ENCODE measurements at regions of chr4 and their contacts with region 1.

Region 1: DNA sequence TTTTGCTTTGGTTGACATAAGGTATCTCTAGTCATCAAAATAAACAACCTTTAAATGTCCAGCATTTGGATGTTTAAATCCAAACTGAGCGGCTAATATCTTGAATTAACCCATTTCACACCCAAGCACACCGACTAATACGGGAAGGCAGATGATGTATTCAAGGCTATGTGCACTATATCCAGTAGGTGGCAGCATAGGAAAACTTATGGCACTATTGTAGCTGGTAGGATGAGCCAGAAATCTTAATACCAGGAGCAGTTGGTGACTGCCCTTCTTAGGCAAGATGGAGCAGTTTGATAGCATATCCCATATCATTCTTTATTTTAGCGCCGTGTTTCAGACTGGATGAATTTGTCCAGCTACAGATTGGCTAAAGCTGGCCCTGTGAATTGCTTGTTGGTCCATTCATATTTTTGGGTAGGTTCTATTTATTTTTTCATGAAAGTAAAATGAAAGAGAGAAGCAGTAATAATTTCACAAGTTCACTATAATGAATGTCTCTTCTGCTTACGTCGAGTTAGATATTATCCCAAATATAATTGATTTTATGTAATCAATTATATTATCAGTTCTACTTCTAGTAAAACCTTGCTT is 24.4 kb downstream of the UCHL1 start:
- DNase-seq: peak; percentile 88
- H3K4me3 ChIP-seq: no peak overlapping the region
- H3K27ac ChIP-seq: no peak overlapping the region
- H3K4me1 ChIP-seq: no peaks in the 10 kb centered on the region
- H3K27me3 ChIP-seq: no peaks in the 10 kb centered on the region
- CTCF ChIP-seq: peak; percentile 87

Region 2: DNA sequence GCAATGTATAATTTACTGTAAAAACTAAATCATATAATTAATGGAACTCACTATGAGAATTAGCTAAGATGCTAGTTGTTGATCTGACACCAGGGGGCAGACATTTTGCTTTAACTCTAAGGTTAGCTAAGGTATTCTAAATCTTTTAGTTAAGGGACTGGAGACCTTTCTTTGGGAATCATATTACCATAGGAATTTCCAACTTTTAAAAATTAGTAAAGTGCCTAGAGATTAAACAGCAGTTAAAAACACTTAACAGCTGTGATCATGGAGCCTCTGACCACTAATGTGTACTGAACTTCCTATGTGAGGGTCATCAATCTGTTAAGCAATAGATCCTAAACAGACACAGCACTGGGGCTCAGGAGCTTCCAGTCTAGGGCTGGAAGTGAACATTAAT is 304.8 kb before region 1 on chr4:
- CTCF ChIA-PET with region 1: no interaction called
- POLR2A ChIA-PET with region 1: no interaction called
- intact Hi-C with region 1: no loop called
- DNase-seq: peak; percentile 62
- H3K4me3 ChIP-seq: no peak overlapping the region
- H3K27ac ChIP-seq: no peak overlapping the region
- H3K4me1 ChIP-seq: no peaks in the 10 kb centered on the region
- H3K27me3 ChIP-seq: no peaks in the 10 kb centered on the region
- CTCF ChIP-seq: peak; percentile 77

Region 3: DNA sequence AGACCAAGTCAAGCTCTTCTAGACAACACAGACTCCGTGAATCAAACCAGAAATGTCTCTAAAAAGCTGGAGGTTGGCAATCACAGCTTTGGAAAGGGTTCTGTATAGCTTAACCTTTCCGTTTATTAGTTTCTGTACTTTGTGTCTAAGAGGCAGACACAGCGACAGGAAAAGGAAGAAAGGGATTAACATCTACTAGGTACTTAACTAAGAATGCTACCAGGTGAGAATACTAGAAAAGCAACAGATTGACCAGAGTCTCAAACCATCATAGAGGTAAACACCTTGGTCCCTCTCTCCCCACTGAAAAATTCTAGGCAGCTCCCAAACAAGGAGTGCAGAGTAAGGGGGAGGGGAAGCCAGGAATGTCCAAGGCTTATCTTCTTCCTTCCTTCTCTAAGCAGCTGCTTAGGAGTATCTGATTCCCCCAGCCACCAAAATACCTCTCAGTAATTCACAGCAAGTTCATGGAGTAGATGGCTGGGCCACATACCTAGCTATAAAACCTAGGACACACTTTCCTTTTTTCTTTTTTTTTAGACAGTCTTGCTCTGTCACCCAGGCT is 147.6 kb before region 1 on chr4:
- CTCF ChIA-PET with region 1: no interaction called
- POLR2A ChIA-PET with region 1: no interaction called
- intact Hi-C with region 1: no loop called
- DNase-seq: no peak
- H3K4me3 ChIP-seq: no peak overlapping the region
- H3K27ac ChIP-seq: no peak overlapping the region
- H3K4me1 ChIP-seq: peaks cover 7% of the 10 kb centered on the region
- H3K27me3 ChIP-seq: peaks cover 11% of the 10 kb centered on the region
- CTCF ChIP-seq: no peak

Region 4: DNA sequence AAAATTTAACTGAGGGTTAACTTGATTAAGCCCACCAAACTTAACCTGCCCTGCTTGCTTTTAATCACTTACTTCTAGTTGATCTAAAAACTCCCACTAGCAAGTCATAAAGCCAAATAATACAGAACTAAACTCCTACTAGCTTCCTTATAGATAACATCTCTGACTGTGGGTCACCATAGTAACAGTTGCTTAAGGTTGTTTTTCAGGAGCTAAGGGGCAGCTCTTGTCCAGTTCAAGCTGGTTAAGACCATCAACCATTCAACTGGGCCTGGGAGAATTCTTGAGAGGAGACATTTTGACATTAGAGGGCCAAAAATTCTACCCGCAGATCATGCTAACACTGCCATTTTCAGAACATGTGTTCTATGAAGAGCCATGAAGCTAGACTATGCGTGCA is 42.6 kb after region 1 on chr4:
- CTCF ChIA-PET with region 1: no interaction called
- POLR2A ChIA-PET with region 1: no interaction called
- intact Hi-C with region 1: no loop called
- DNase-seq: no peak
- H3K4me3 ChIP-seq: no peak overlapping the region
- H3K27ac ChIP-seq: no peak overlapping the region
- H3K4me1 ChIP-seq: no peaks in the 10 kb centered on the region
- H3K27me3 ChIP-seq: peaks cover 4% of the 10 kb centered on the region
- CTCF ChIP-seq: no peak

Region 5: GRCh38 chr4:41644288-41644914 is 363.3 kb after region 1 on chr4:
- CTCF ChIA-PET with region 1: interaction called, 32 read pairs
- POLR2A ChIA-PET with region 1: no interaction called
- intact Hi-C with region 1: loop called (anchors 1 kb)
- DNase-seq: peak; percentile 79
- H3K4me3 ChIP-seq: no peak overlapping the region
- H3K27ac ChIP-seq: no peak overlapping the region
- H3K4me1 ChIP-seq: peaks cover 6% of the 10 kb centered on the region
- H3K27me3 ChIP-seq: peaks cover 37% of the 10 kb centered on the region
- CTCF ChIP-seq: peak; percentile 96

Region 6: DNA sequence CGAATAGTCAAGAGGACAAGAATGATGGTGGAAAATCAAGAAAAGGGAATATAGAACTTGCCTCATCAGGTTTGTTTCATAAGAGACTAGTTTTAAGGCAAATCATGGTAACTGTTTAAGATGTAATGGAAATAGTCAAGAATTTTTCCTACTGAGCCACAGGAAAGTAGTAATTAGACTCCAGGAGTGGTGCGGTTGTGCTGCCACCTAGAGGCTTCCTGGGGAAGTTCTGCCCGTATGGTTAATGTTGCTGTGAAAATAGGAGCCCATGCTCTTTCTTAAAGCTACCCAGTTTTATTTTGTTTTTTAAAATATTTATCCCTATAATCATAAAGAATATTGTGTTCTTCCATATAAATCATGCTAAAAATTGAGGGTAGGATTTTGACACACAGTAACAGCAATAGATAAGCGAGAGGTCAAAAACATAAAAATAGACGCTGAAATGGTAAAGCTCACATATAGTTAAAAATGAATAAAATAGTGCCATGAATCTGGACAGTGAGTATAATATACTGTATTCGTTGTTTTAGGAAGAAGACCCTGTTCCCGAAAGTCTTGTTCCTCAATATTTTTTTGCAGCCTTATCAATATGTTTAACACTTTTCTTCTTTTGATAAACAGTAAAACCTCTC is 380.4 kb after region 1 on chr4:
- CTCF ChIA-PET with region 1: interaction called, 10 read pairs
- POLR2A ChIA-PET with region 1: no interaction called
- intact Hi-C with region 1: loop called (anchors 1 kb)
- DNase-seq: peak; percentile 63
- H3K4me3 ChIP-seq: no peak overlapping the region
- H3K27ac ChIP-seq: no peak overlapping the region
- H3K4me1 ChIP-seq: no peaks in the 10 kb centered on the region
- H3K27me3 ChIP-seq: peaks cover 23% of the 10 kb centered on the region
- CTCF ChIP-seq: peak; percentile 90

Region 7: DNA sequence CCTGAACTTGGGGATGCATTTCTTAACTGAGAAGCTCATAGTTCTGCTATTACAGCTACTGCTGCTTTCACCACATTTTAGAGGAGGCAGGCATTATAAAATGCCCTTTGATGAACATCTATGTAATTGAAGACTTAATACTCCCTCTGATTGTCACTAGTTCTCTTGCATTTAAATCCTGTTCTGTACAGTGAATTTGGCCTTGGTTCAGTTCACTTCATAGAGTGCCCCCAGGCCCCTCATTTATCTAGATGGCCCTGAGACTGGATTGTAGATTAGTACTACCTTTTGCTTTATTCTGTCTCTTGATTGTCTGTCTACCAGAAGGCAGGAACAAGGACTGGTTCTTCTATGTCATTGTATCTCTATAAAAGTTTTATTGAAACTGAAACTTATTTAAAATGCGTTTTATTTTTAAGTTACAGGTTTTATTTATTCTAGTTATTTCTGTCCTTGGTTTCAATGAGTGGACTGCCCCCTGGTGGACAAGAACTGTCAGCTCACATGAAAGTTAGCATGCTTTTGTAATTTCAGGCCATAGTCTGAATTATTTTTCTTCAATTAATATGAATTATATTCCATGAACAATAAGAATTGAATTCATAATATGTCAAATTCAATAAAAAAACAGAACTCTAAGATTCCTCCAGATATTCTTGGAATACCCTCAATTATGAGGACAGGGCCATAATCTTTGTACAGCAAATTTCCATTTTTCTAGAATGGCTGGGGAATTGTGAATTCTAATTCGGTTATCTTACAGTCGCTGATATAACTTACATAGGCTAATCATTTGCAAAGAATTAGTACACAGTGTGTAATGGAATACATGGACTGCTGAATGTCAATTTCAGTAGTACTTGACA is 606.9 kb after region 1 on chr4:
- CTCF ChIA-PET with region 1: interaction called, 5 read pairs
- POLR2A ChIA-PET with region 1: no interaction called
- intact Hi-C with region 1: loop called (anchors 2 kb)
- DNase-seq: peak; percentile 58
- H3K4me3 ChIP-seq: no peak overlapping the region
- H3K27ac ChIP-seq: no peak overlapping the region
- H3K4me1 ChIP-seq: no peaks in the 10 kb centered on the region
- H3K27me3 ChIP-seq: peaks cover 21% of the 10 kb centered on the region
- CTCF ChIP-seq: peak; percentile 90

Measured in A673 (cell line).